ENCODE measurements at regions of chr4 and their contacts with region 1.

Region 1: DNA sequence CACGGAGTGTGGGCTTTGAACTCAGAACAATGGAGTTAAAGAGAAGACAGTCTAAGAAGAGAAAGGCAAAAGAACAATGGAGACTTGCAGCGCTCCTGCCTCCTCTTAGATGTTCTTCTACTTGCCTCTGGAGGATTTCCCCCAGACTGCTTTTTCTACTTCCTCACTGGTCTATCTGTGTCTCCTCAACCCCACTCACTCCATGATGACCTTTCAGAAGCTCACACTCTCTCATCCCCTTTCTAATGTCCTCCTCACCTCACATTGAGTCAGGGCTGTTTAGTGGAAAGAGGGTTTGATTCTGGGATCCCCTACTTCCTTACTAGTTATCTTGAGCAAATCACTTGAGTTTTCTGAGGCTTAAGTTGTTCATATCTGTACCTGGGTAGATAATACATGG is 12.2 kb upstream of the HERC6 start:
- DNase-seq: no peak
- ATAC-seq: no peak
- H3K4me3 ChIP-seq: no peak overlapping the region
- H3K27ac ChIP-seq: no peak overlapping the region
- H3K4me1 ChIP-seq: peaks cover 0 to 6% (median 0%) of the 10 kb centered on the region in 9 donors
- H3K27me3 ChIP-seq: no peaks in the 10 kb centered on the region
- CTCF ChIP-seq: no peak

Region 2: DNA sequence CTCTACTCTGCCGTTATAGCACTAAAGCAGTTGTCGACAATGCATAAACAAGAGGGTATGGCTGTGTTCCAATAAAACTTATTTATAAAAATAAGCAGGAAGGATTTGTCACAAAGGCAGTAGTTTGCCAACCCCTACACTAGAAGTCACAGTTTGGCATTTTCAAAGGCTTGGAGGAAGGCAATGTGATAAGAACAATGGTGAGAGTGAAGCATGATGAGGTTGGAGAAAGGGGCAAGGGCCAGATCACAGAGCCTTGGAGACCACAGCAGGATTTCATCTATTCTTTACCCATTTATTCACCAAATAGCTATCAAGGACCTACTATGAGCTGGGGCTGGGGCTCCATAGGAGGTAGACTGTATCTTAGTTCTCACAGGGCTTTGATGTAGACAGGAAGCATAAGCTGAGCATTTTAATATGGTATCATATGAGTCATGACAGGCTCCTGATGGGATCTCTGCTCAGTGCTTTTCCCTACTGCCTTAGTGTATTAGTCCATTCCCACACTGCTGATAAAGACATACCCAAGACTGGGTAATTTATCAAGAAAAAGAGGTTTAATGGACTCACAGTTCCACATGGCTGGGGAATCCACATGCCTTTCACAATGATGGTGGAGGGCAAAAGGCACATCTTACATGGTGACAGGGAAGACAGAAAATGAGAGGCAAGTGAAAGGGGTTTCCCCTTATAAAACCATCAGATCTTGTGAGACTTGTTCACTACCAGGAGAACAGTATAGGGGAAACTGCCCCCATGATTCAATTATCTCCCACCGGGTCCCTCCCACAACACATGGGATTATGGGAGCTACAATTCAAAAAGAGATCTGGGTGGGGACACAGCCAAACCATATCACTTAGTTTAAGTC is 141.0 kb before region 1 on chr4:
- intact Hi-C with region 1: loop called in 3 of 10 experiments (anchors 5 to 10 kb)
- DNase-seq: no peak
- ATAC-seq: peak in 5 of 8 donors; percentile 26 to 58 (median 46)
- H3K4me3 ChIP-seq: no peak overlapping the region
- H3K27ac ChIP-seq: peak overlapping the region in 1 of 10 donors; percentile 39
- H3K4me1 ChIP-seq: peaks cover 0 to 40% (median 17%) of the 10 kb centered on the region in 9 donors
- H3K27me3 ChIP-seq: no peaks in the 10 kb centered on the region
- CTCF ChIP-seq: no peak

Region 3: GRCh38 chr4:88442703-88443191 is 76.3 kb after region 1 on chr4:
- intact Hi-C with region 1: no loop called
- DNase-seq: no peak
- ATAC-seq: no peak
- H3K4me3 ChIP-seq: no peak overlapping the region
- H3K27ac ChIP-seq: no peak overlapping the region
- H3K4me1 ChIP-seq: peaks cover 0 to 14% (median 0%) of the 10 kb centered on the region in 9 donors
- H3K27me3 ChIP-seq: no peaks in the 10 kb centered on the region
- CTCF ChIP-seq: no peak

Region 4: DNA sequence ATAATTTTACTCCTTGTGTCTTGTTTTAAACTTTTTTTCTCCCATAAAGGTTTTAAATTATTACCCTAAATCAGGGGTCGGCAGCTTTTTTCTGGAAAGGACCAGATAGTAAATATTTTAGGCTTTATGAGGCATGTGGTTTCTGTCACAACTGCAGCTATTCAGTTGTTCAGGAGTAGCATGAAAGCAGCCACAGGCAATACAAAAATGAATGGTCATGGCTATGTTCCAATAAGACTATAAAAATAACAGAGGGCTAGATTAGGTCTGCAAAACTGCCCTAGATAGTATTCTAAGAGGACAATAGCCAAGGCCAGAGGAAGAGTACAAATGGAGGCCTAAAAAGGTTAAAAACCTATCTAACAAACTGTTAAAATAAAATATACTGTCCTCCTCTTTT is 115.1 kb after region 1 on chr4:
- intact Hi-C with region 1: loop called in 1 of 10 experiments (anchors 1 kb)
- DNase-seq: no peak
- ATAC-seq: peak in 4 of 8 donors; percentile 50 to 75 (median 64)
- H3K4me3 ChIP-seq: no peak overlapping the region
- H3K27ac ChIP-seq: peak overlapping the region in 3 of 10 donors; percentile 12 to 59 (median 45)
- H3K4me1 ChIP-seq: peaks cover 0 to 7% (median 0%) of the 10 kb centered on the region in 9 donors
- H3K27me3 ChIP-seq: no peaks in the 10 kb centered on the region
- CTCF ChIP-seq: no peak

Region 5: GRCh38 chr4:88503344-88503743 is 136.9 kb after region 1 on chr4:
- intact Hi-C with region 1: loop called in 1 of 10 experiments (anchors 10 kb)
- DNase-seq: no peak
- ATAC-seq: no peak
- H3K4me3 ChIP-seq: no peak overlapping the region
- H3K27ac ChIP-seq: no peak overlapping the region
- H3K4me1 ChIP-seq: no peaks in the 10 kb centered on the region
- H3K27me3 ChIP-seq: no peaks in the 10 kb centered on the region
- CTCF ChIP-seq: no peak

Region 6: GRCh38 chr4:88549815-88550214 is 183.4 kb after region 1 on chr4:
- intact Hi-C with region 1: no loop called
- DNase-seq: no peak
- ATAC-seq: no peak
- H3K4me3 ChIP-seq: no peak overlapping the region
- H3K27ac ChIP-seq: no peak overlapping the region
- H3K4me1 ChIP-seq: no peaks in the 10 kb centered on the region
- H3K27me3 ChIP-seq: no peaks in the 10 kb centered on the region
- CTCF ChIP-seq: no peak

Measured in heart right ventricle (tissue), 16 donors.